Psoas muscle (tissue), 8 donors: ENCODE measurements at regions of chr5 and their contacts with region 1.

Region 1: GRCh38 chr5:90932052-90932699 is 373.6 kb downstream of the ADGRV1 start:
- DNase-seq: no peak
- ATAC-seq: peak in 3 of 4 donors; percentile 57 to 85 (median 65)
- H3K4me3 ChIP-seq: no peak overlapping the region
- H3K27ac ChIP-seq: no peak overlapping the region
- H3K4me1 ChIP-seq: no peaks in the 10 kb centered on the region
- H3K27me3 ChIP-seq: peaks cover 0 to 2% (median 0%) of the 10 kb centered on the region in 3 donors
- CTCF ChIP-seq: peak; percentile 83

Region 2: GRCh38 chr5:91101600-91102379 is 169.6 kb after region 1 on chr5:
- intact Hi-C with region 1: loop called (anchors 2 to 10 kb)
- DNase-seq: peak; percentile 60 to 73
- ATAC-seq: peak; percentile 90 to 99 (median 97)
- H3K4me3 ChIP-seq: no peak overlapping the region
- H3K27ac ChIP-seq: no peak overlapping the region
- H3K4me1 ChIP-seq: peaks cover 3% of the 10 kb centered on the region
- H3K27me3 ChIP-seq: no peaks in the 10 kb centered on the region
- CTCF ChIP-seq: peak; percentile 77

Region 3: GRCh38 chr5:91212714-91213092 is 280.5 kb after region 1 on chr5:
- intact Hi-C with region 1: no loop called
- DNase-seq: no peak
- ATAC-seq: peak; percentile 28 to 63 (median 46)
- H3K4me3 ChIP-seq: no peak overlapping the region
- H3K27ac ChIP-seq: peak overlapping the region; percentile 18
- H3K4me1 ChIP-seq: peaks cover 6% of the 10 kb centered on the region
- H3K27me3 ChIP-seq: no peaks in the 10 kb centered on the region
- CTCF ChIP-seq: no peak

Region 4: DNA sequence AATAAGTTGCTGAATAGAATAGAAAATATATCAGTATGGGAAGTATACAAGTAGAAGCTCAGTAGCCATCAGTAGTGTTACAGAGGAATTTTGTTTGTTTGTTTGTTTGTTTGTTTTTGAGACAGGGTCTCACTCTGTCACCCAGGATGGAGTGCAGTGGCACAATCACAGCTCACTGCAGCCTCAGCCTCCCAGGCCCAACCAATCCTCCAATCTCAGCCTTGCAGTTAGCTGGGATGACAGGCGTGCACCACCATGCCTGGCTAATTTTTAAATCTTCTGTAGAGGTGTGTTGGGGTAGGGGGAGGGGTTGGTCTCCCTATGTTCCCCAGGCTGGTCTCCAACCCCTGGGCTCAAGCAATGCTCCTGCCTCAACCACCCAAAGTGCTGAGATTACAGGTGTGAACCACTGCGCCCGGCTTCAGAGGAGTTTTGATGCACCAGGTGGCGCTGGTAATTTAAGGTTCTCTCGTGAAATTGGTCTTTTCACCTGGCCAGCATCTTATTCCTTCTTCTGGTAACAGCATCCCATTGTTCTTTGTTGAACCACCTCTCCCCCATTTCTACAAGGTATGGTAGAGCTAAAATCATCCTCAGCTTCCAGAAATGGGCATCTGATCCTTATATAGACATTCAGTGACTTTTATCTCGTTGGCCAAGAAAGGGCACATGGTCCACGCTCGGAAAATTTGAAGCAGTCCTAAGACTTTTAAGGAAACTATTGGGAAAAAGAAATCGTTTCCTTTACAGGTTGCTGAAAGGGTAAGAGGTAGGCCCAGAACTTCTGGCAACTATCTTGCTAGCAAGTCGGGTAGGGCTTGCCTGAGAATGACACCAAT is 293.9 kb after region 1 on chr5:
- intact Hi-C with region 1: loop called in 1 of 2 experiments (anchors 10 kb)
- DNase-seq: no peak
- ATAC-seq: peak; percentile 51 to 85 (median 68)
- H3K4me3 ChIP-seq: no peak overlapping the region
- H3K27ac ChIP-seq: no peak overlapping the region
- H3K4me1 ChIP-seq: no peaks in the 10 kb centered on the region
- H3K27me3 ChIP-seq: no peaks in the 10 kb centered on the region
- CTCF ChIP-seq: peak; percentile 48

Region 5: GRCh38 chr5:91419571-91420537 is 487.7 kb after region 1 on chr5:
- intact Hi-C with region 1: loop called (anchors 2 to 10 kb)
- DNase-seq: peak; percentile 34 to 51
- ATAC-seq: peak in 2 of 4 donors; percentile 21 to 67
- H3K4me3 ChIP-seq: no peak overlapping the region
- H3K27ac ChIP-seq: no peak overlapping the region
- H3K4me1 ChIP-seq: no peaks in the 10 kb centered on the region
- H3K27me3 ChIP-seq: no peaks in the 10 kb centered on the region
- CTCF ChIP-seq: peak; percentile 86